ENCODE measurements at regions of chr11 and their contacts with region 1.

Region 1: DNA sequence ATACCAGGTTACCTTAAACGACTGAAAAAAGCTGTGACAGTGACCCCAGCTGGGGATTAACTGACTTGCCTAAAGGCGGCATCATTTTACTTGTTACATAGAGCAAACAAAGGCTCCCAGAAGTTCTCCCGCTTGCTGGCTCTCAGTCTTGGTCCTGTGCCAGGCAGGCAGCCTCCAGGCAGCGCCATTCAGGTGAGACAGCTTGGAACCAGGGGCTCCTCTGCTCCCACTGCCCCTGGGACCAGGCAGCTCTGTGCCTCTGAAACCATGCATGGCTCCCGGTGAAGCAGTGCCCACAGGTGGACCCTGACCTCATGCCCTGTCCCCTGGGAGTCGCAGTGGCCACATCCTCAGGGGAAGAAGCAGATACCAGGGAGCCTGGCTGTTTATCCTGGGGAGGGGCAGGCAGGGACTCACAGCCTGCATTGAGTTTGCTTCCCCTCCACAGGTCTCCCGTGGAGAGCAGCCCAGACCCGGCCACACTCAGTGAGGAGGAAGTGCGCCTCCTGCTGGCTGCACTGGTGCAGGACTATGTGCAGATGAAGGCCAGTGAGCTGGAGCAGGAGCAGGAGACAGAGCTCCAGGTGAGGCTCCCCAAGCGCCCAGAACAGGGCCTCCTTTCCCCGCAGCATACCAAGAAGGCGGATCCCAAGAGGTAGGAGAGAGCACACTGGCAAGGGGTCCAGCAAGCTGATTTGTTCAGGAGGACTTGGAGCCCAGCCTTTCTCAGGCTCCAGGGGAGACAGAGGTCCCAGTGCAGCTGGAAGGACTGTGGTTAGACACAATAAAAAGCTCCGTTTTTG is 15.6 kb upstream of the CYP2R1 start:
- DNase-seq: peak; percentile 93
- ATAC-seq: peak; percentile 59
- H3K4me3 Mint-ChIP-seq: no peak overlapping the region
- H3K27ac Mint-ChIP-seq: no peak overlapping the region
- H3K4me1 Mint-ChIP-seq: peaks cover 48% of the 10 kb centered on the region
- H3K27me3 Mint-ChIP-seq: no peaks in the 10 kb centered on the region
- CTCF ChIP-seq: peak; percentile 90

Region 2: GRCh38 chr11:14454861-14455632 is 452.6 kb before region 1 on chr11:
- CTCF ChIA-PET with region 1: interaction called, 10 read pairs
- POLR2A ChIA-PET with region 1: interaction called, 3 read pairs
- intact Hi-C with region 1: no loop called
- DNase-seq: no peak
- ATAC-seq: peak; percentile 47
- H3K4me3 Mint-ChIP-seq: no peak overlapping the region
- H3K27ac Mint-ChIP-seq: peak overlapping the region; percentile 20
- H3K4me1 Mint-ChIP-seq: peaks cover 7% of the 10 kb centered on the region
- H3K27me3 Mint-ChIP-seq: no peaks in the 10 kb centered on the region
- CTCF ChIP-seq: peak; percentile 83

Region 3: GRCh38 chr11:14537134-14537599 is 370.4 kb before region 1 on chr11:
- CTCF ChIA-PET with region 1: interaction called, 11 read pairs
- POLR2A ChIA-PET with region 1: no interaction called
- intact Hi-C with region 1: loop called (anchors 2 kb)
- DNase-seq: peak; percentile 70
- ATAC-seq: peak; percentile 83
- H3K4me3 Mint-ChIP-seq: peak overlapping the region; percentile 64
- H3K27ac Mint-ChIP-seq: peak overlapping the region; percentile 92
- H3K4me1 Mint-ChIP-seq: peaks cover 44% of the 10 kb centered on the region
- H3K27me3 Mint-ChIP-seq: no peaks in the 10 kb centered on the region
- CTCF ChIP-seq: peak; percentile 90

Region 4: GRCh38 chr11:14764579-14765527 is 142.8 kb before region 1 on chr11:
- CTCF ChIA-PET with region 1: interaction called, 20 read pairs
- POLR2A ChIA-PET with region 1: no interaction called
- intact Hi-C with region 1: no loop called
- DNase-seq: peak; percentile 66
- ATAC-seq: peak; percentile 64
- H3K4me3 Mint-ChIP-seq: peak overlapping the region; percentile 64
- H3K27ac Mint-ChIP-seq: no peak overlapping the region
- H3K4me1 Mint-ChIP-seq: peaks cover 47% of the 10 kb centered on the region
- H3K27me3 Mint-ChIP-seq: no peaks in the 10 kb centered on the region
- CTCF ChIP-seq: no peak

Region 5: GRCh38 chr11:14872032-14872431 is 35.6 kb before region 1 on chr11:
- CTCF ChIA-PET with region 1: interaction called, 17 read pairs
- POLR2A ChIA-PET with region 1: no interaction called
- intact Hi-C with region 1: no loop called
- DNase-seq: no peak
- ATAC-seq: peak; percentile 82
- H3K4me3 Mint-ChIP-seq: no peak overlapping the region
- H3K27ac Mint-ChIP-seq: peak overlapping the region; percentile 68
- H3K4me1 Mint-ChIP-seq: peaks cover 25% of the 10 kb centered on the region
- H3K27me3 Mint-ChIP-seq: no peaks in the 10 kb centered on the region
- CTCF ChIP-seq: no peak

Region 6: DNA sequence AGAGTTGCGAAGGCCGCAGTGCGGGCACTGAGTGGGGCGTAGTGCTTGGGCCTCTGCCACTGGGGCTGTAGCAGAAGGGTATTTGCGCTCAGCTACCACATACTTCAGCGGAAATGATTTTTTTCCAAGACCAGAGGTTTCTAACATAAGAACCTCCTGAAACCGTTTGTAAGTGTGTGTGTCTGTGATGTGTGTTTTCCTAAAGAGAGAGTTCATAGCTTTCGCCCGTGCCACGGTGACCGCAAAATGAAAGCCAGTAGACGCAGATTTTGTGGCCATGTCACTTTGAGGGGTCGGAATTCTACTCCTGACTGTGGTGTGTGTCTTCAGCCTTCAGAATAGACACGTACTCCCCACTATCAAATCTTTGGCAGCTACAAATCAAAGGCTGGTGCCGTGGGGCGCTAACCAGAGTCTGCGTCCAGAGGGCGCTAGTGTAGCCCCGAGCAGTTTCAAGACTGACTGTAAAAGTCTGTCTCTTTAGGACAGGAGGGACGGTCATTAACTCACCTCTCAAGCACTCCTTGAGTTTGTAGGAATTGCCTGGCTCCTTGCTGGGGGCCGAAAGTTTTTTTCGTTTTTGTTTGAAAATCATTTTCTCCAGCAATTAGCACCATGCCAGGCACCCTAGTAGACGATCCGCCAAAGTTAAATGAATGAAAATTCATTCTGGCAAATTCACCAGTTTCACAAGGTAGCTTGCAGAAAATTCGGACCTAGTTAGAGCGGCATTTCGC is 67.1 kb after region 1 on chr11:
- CTCF ChIA-PET with region 1: interaction called, 85 read pairs
- POLR2A ChIA-PET with region 1: interaction called, 3 read pairs
- intact Hi-C with region 1: loop called (anchors 5 kb)
- DNase-seq: peak; percentile 85
- ATAC-seq: peak; percentile 70
- H3K4me3 Mint-ChIP-seq: peak overlapping the region; percentile 67
- H3K27ac Mint-ChIP-seq: no peak overlapping the region
- H3K4me1 Mint-ChIP-seq: peaks cover 34% of the 10 kb centered on the region
- H3K27me3 Mint-ChIP-seq: peaks cover 62% of the 10 kb centered on the region
- CTCF ChIP-seq: peak; percentile 80

Region 7: GRCh38 chr11:15074206-15075161 is 166.9 kb after region 1 on chr11:
- CTCF ChIA-PET with region 1: interaction called, 171 read pairs
- POLR2A ChIA-PET with region 1: interaction called, 3 read pairs
- intact Hi-C with region 1: loop called (anchors 1 kb)
- DNase-seq: peak; percentile 96
- ATAC-seq: peak; percentile 92
- H3K4me3 Mint-ChIP-seq: peak overlapping the region; percentile 80
- H3K27ac Mint-ChIP-seq: peak overlapping the region; percentile 83
- H3K4me1 Mint-ChIP-seq: peaks cover 14% of the 10 kb centered on the region
- H3K27me3 Mint-ChIP-seq: peaks cover 14% of the 10 kb centered on the region
- CTCF ChIP-seq: peak; percentile 94